Left lung (tissue), 14 donors: ENCODE measurements at regions of chr17 and their contacts with region 1.

Region 1: DNA sequence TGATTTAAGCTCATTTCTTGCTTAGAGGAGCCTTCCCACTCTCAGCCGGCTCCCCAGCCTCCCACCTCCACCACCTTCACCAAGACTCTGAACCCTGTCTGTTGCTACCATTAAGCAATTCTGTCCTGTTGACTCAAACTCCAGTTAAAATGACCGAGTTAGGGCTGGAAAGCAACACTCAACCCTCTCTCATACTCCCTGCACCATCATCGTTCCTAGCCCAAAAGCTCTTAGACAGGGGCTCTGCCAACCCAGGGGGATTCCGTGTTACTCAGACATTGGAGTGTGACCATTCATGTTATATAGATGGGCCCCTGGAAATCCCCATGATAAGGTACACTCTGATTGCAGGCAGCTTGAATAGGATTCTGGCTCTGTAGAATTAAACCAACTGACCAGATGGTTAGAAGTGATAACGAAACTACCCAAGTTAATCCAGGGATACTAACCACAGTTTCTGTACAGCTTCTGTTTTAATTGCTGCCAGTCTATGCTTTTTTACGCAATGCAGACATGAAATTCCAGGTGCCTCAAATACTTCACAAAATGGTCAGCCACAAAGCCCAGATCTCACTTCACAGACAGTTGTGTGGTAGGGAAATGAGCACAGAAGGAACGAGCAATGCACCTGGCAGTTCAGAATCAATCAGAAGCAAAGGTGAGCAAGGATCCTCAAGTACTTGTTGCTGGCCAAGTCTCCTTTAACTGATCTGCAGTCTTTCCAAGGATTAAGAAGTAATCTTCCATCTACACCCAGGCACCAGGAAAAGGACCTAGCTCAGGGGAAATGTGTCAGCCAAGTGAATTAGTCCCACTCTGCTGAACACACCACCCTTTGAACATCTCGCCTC is 2.1 kb downstream of the SSTR2 start:
- DNase-seq: no peak
- ATAC-seq: no peak
- H3K4me3 ChIP-seq: peak overlapping the region in 1 of 2 donors; percentile 41
- H3K27ac ChIP-seq: no peak overlapping the region
- H3K4me1 ChIP-seq: peaks cover 7 to 33% of the 10 kb centered on the region in 2 donors
- H3K27me3 ChIP-seq: peaks cover 21 to 83% of the 10 kb centered on the region in 2 donors
- CTCF ChIP-seq: no peak

Region 2: GRCh38 chr17:72985881-72986720 is 180.9 kb before region 1 on chr17:
- intact Hi-C with region 1: loop called in 1 of 2 experiments (anchors 10 kb)
- DNase-seq: peak in 3 of 4 donors; percentile 27 to 65 (median 54)
- ATAC-seq: peak; percentile 81
- H3K4me3 ChIP-seq: no peak overlapping the region
- H3K27ac ChIP-seq: peak overlapping the region in 1 of 2 donors; percentile 13
- H3K4me1 ChIP-seq: peaks cover 0 to 22% of the 10 kb centered on the region in 2 donors
- H3K27me3 ChIP-seq: no peaks in the 10 kb centered on the region
- CTCF ChIP-seq: peak; percentile 68 to 91